Mammary epithelial cell (primary cell): ENCODE measurements at regions of chr22 and their contacts with region 1.

Region 1: GRCh38 chr22:39319270-39320022 is at the start of gene RPL3:
- DNase-seq: peak; percentile 96
- H3K4me3 ChIP-seq: peak within 1 kb of the TSS; percentile 74 to 97 (median 87)
- H3K27ac ChIP-seq: peak within 1 kb of the TSS; percentile 92
- H3K4me1 ChIP-seq: peaks cover 20% of the 10 kb centered on the region
- H3K27me3 ChIP-seq: no peaks in the 10 kb centered on the region
- CTCF ChIP-seq: no peak
- total RNA-seq, gene RPL3: 1,970 to 2,165 TPM

Region 2: DNA sequence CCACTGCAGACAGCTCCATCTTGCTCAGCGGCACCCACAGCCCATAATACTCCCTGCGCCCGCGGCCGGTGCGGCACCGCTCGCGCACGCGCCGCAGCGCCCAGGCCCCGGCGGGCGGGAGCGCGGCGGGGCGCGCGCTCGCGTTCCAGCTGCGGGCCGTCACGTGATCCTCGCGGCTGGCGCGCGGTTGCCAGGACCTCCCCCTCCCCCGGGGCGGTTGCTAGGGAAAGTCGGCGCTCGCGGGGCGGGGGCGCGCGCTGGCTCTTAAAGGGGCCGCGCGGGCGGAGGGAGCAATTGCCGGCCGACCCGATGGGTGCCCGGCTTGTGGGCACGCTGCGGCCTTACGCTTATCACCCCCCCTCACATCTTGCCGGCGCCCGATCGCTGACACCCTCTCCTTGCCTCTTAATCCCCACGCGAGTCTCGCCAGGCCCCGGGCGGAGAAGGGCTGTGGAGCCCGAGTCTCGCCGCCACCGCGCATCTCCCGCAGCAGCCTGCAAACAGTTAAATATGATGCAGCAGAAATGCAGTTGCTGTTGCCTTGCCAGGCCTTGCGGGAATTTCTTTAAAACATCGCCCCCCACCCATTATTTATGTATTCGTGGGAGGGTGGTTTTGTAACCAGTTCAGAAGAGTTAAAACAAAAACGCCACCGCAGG is 447.1 kb before region 1 on chr22 and contains the start of gene CBX6:
- CTCF ChIA-PET with region 1: no interaction called
- dilution Hi-C with region 1: no loop called
- in situ Hi-C with region 1: loop called in 1 of 2 experiments (anchors 25 kb)
- intact Hi-C with region 1: no loop called
- DNase-seq: peak; percentile 81
- H3K4me3 ChIP-seq: peak within 1 kb of the TSS; percentile 68 to 83 (median 76)
- H3K27ac ChIP-seq: peak within 1 kb of the TSS; percentile 36
- H3K4me1 ChIP-seq: peaks cover 27% of the 10 kb centered on the region
- H3K27me3 ChIP-seq: no peaks in the 10 kb centered on the region
- CTCF ChIP-seq: no peak
- total RNA-seq, gene CBX6: 32.3 to 55.7 TPM

Region 3: DNA sequence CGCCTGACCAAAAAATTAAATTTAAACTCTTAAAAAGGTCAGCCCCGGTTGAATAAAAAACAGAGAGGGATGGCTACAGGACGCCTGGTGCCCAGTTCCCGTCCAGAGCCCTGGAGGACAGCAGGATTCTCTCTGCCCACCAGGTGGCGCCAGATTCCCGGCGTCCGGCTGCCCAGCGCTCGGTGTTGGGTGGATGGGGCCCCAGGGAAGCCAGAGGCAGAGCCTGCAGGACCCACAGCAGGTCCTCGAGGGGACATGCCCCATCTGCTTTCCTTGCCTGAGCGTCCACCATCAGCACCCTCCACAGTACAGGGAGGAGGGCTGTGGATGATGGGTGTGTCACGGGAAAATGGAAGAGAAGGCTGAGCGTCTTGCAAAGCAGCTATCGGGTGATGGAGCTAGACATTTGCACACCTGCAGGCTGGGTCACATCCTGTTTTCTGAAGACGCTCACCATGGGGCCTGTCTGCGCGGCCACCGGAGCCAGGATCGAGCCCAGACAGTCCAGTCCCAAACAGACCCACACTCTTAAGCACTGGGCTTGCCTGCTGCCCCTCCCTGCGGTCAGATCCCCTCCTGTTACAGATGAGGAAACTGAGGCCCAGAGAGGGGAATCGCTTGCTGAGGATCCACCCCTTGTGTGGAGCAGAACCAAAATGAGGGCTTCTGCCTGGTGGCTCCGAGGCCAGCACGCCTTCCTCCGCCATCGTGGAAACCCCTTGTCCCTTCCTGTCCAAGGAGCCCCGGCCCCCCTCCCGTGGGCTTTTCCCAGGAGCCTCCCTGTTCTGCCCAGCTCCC is 148.4 kb before region 1 on chr22:
- CTCF ChIA-PET with region 1: interaction called, 3 read pairs
- dilution Hi-C with region 1: no loop called
- in situ Hi-C with region 1: loop called in 1 of 2 experiments (anchors 5 kb)
- intact Hi-C with region 1: loop called (anchors 1 kb)
- DNase-seq: peak; percentile 69
- H3K4me3 ChIP-seq: no peak overlapping the region
- H3K27ac ChIP-seq: no peak overlapping the region
- H3K4me1 ChIP-seq: peaks cover 31% of the 10 kb centered on the region
- H3K27me3 ChIP-seq: no peaks in the 10 kb centered on the region
- CTCF ChIP-seq: peak; percentile 70 to 94

Region 4: GRCh38 chr22:39422101-39422500 is 102.7 kb after region 1 on chr22:
- CTCF ChIA-PET with region 1: no interaction called
- dilution Hi-C with region 1: loop called (anchors 5 kb)
- in situ Hi-C with region 1: no loop called
- intact Hi-C with region 1: no loop called
- DNase-seq: no peak
- H3K4me3 ChIP-seq: no peak overlapping the region
- H3K27ac ChIP-seq: no peak overlapping the region
- H3K4me1 ChIP-seq: no peaks in the 10 kb centered on the region
- H3K27me3 ChIP-seq: no peaks in the 10 kb centered on the region
- CTCF ChIP-seq: no peak